CD4-positive, alpha-beta memory T cell (primary cell): ENCODE measurements at regions of chr17 and their contacts with region 1.

Region 1: DNA sequence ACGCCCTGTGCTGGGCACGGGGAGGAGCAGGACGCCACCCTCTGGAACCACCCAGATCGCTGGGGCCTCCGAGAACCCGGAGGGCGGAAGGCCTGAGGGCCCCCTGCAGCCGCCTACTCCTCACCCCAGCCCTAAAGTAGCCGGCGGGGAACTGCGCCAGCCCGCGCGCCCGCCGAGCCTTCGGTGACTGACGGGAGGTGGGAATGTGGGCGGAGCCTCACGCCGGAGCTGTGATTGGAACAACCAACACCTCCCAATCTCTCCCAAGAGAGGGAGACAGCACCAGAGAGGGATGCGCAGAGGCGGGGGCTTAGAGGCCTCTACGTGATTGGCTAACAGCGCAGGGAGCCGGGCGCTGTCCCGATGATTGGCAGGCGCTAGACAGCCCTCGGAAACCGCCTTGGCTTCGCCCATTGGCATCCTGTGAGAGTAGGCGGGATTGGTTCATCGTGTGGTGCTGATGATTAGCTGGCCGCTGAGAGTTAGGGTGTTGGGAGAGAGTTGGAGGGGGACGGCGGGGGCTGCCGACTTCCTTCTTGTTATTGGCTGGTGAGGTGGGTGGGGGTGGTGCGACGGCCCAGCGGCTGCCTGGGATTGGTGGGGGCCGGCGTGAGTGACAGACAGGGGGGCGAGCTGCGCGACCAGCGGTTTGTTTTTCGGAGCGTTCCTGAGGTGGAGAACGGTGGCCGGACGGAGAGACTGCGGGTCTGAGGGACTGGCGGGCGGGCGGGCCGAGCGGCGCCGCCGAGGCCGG is at the start of gene MAP3K3:
- DNase-seq: peak; percentile 97 to 100 (median 98)
- H3K4me3 ChIP-seq: peak within 1 kb of the TSS; percentile 61 to 77
- H3K4me3 Mint-ChIP-seq: peak within 1 kb of the TSS; percentile 95 to 99 (median 98)
- H3K27ac ChIP-seq: peak within 1 kb of the TSS; percentile 79
- H3K27ac Mint-ChIP-seq: peak within 1 kb of the TSS; percentile 90 to 96 (median 94)
- H3K4me1 ChIP-seq: peaks cover 44% of the 10 kb centered on the region
- H3K4me1 Mint-ChIP-seq: peaks cover 29 to 50% (median 40%) of the 10 kb centered on the region in 4 donors
- H3K27me3 ChIP-seq: no peaks in the 10 kb centered on the region
- H3K27me3 Mint-ChIP-seq: no peaks in the 10 kb centered on the region
- total RNA-seq, gene MAP3K3: 98.5 to 98.8 TPM

Region 2: GRCh38 chr17:63434876-63435684 is 186.9 kb before region 1 on chr17:
- CTCF ChIA-PET with region 1: no interaction called
- POLR2A ChIA-PET with region 1: interaction called, 29 read pairs
- intact Hi-C with region 1: no loop called
- DNase-seq: peak; percentile 70 to 82 (median 76)
- H3K4me3 ChIP-seq: no peak overlapping the region
- H3K4me3 Mint-ChIP-seq: peak overlapping the region in 7 of 8 donors; percentile 48 to 79 (median 65)
- H3K27ac ChIP-seq: no peak overlapping the region
- H3K27ac Mint-ChIP-seq: peak overlapping the region; percentile 86 to 97 (median 92)
- H3K4me1 ChIP-seq: peaks cover 56% of the 10 kb centered on the region
- H3K4me1 Mint-ChIP-seq: peaks cover 15 to 70% (median 41%) of the 10 kb centered on the region in 4 donors
- H3K27me3 ChIP-seq: no peaks in the 10 kb centered on the region
- H3K27me3 Mint-ChIP-seq: no peaks in the 10 kb centered on the region

Region 3: GRCh38 chr17:63549946-63550807 is 71.8 kb before region 1 on chr17 and contains the start of gene DCAF7:
- CTCF ChIA-PET with region 1: interaction called, 3 read pairs
- POLR2A ChIA-PET with region 1: interaction called, 13 read pairs
- intact Hi-C with region 1: loop called (anchors 1 kb)
- DNase-seq: peak; percentile 99 to 100 (median 99)
- H3K4me3 ChIP-seq: peak within 1 kb of the TSS; percentile 90 to 91
- H3K4me3 Mint-ChIP-seq: peak within 1 kb of the TSS; percentile 92 to 99 (median 97)
- H3K27ac ChIP-seq: peak within 1 kb of the TSS; percentile 91
- H3K27ac Mint-ChIP-seq: peak within 1 kb of the TSS; percentile 90 to 98 (median 97)
- H3K4me1 ChIP-seq: peaks cover 41% of the 10 kb centered on the region
- H3K4me1 Mint-ChIP-seq: peaks cover 26 to 51% (median 36%) of the 10 kb centered on the region in 4 donors
- H3K27me3 ChIP-seq: no peaks in the 10 kb centered on the region
- H3K27me3 Mint-ChIP-seq: no peaks in the 10 kb centered on the region
- total RNA-seq, gene DCAF7: 88.1 to 93.0 TPM

Region 4: GRCh38 chr17:63635787-63636186 is 13.8 kb after region 1 on chr17:
- CTCF ChIA-PET with region 1: interaction called, 6 read pairs
- POLR2A ChIA-PET with region 1: interaction called, 12 read pairs
- intact Hi-C with region 1: no loop called
- DNase-seq: no peak
- H3K4me3 ChIP-seq: no peak overlapping the region
- H3K4me3 Mint-ChIP-seq: no peak overlapping the region
- H3K27ac ChIP-seq: no peak overlapping the region
- H3K27ac Mint-ChIP-seq: peak overlapping the region in 1 of 7 donors; percentile 69
- H3K4me1 ChIP-seq: peaks cover 22% of the 10 kb centered on the region
- H3K4me1 Mint-ChIP-seq: peaks cover 31 to 53% (median 44%) of the 10 kb centered on the region in 4 donors
- H3K27me3 ChIP-seq: no peaks in the 10 kb centered on the region
- H3K27me3 Mint-ChIP-seq: no peaks in the 10 kb centered on the region

Region 5: DNA sequence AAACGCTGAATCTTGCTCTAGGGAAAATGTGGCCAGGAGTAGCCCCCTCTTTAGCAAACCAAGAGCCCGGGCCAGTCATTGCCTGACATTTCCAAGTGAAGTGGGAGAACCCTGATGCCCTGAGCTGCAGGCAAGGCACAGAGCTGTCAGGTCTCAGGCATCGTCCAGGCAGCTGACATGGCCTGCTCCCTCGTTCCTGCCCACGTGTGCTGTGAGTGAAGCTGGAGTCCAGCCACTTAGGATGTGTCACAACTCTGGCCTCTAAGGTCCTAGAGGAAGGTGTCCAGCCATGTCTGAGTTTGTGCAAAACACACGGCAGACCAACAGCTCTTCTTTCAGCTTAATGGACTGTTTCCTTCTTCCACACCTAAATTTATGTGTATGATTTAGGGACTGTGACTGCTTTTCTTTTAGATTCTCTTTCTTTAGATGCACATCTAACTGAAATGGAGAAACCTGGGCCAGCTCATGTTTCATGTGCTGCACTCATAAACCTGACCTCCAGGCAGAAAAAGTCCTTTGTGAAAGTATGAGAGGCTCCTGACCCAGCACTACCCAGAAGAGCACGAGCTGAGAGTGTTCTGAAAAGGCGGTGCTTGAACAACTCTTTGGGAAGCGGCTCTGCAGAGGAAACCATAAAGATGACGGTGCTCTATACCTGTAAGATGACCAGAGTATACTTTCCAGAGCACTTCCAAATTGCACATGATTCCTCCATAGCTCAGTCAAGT is 92.8 kb after region 1 on chr17:
- CTCF ChIA-PET with region 1: interaction called, 13 read pairs
- POLR2A ChIA-PET with region 1: interaction called, 17 read pairs
- intact Hi-C with region 1: loop called (anchors 1 kb)
- DNase-seq: no peak
- H3K4me3 ChIP-seq: no peak overlapping the region
- H3K4me3 Mint-ChIP-seq: no peak overlapping the region
- H3K27ac ChIP-seq: no peak overlapping the region
- H3K27ac Mint-ChIP-seq: peak overlapping the region in 3 of 7 donors; percentile 6 to 42 (median 7)
- H3K4me1 ChIP-seq: peaks cover 12% of the 10 kb centered on the region
- H3K4me1 Mint-ChIP-seq: peaks cover 10 to 20% (median 13%) of the 10 kb centered on the region in 4 donors
- H3K27me3 ChIP-seq: no peaks in the 10 kb centered on the region
- H3K27me3 Mint-ChIP-seq: no peaks in the 10 kb centered on the region

Region 6: GRCh38 chr17:63751806-63752205 is 129.9 kb after region 1 on chr17:
- CTCF ChIA-PET with region 1: no interaction called
- POLR2A ChIA-PET with region 1: no interaction called
- intact Hi-C with region 1: no loop called
- DNase-seq: peak in 4 of 5 donors; percentile 10 to 25 (median 18)
- H3K4me3 ChIP-seq: no peak overlapping the region
- H3K4me3 Mint-ChIP-seq: peak overlapping the region; percentile 25 to 78 (median 61)
- H3K27ac ChIP-seq: peak overlapping the region; percentile 33
- H3K27ac Mint-ChIP-seq: peak overlapping the region; percentile 69 to 93 (median 73)
- H3K4me1 ChIP-seq: peaks cover 10% of the 10 kb centered on the region
- H3K4me1 Mint-ChIP-seq: peaks cover 7 to 16% (median 8%) of the 10 kb centered on the region in 4 donors
- H3K27me3 ChIP-seq: no peaks in the 10 kb centered on the region
- H3K27me3 Mint-ChIP-seq: no peaks in the 10 kb centered on the region

Region 7: DNA sequence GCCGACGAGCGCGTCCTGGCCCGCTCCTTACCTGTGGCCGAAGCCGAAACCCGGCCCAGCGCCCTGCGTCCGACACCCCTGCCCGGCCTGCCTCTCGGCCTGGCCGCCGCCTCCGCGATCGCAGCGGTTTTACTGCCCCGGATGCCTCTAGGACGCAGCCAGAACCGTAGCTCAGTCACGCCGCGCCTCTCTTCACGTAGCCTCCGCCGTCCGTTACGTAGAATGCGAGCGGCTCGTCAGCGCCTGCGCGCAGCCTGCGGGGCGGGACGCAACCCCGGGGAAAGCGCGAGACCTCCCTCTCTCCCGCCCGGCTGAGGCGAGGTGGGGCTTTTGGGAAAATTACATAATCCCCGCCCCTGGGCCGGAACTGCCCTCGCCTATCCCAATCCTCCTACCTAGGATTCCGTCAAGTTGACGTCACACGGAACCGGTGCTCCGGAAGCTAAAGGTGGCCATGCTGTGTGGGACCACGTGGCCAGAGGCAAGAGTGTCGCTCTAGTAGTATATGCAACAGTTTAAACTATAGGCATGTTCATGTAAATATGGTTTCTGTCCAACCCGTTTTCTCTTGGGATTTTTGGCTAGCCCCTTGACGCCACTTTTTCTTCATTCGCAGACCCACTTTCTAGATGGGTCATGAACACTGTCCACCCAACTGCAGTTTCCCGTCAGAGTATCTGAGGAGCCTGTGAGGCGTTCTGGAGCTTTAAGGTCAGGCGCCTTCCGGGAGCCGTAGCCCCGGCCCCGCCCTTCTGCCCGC is 151.6 kb after region 1 on chr17 and contains the start of gene CCDC47:
- CTCF ChIA-PET with region 1: no interaction called
- POLR2A ChIA-PET with region 1: interaction called, 21 read pairs
- intact Hi-C with region 1: loop called (anchors 1 kb)
- DNase-seq: peak; percentile 99
- H3K4me3 ChIP-seq: peak within 1 kb of the TSS; percentile 87 to 97
- H3K4me3 Mint-ChIP-seq: peak within 1 kb of the TSS; percentile 91 to 100 (median 99)
- H3K27ac ChIP-seq: peak within 1 kb of the TSS; percentile 99
- H3K27ac Mint-ChIP-seq: peak within 1 kb of the TSS; percentile 99 to 100 (median 100)
- H3K4me1 ChIP-seq: peaks cover 66% of the 10 kb centered on the region
- H3K4me1 Mint-ChIP-seq: peaks cover 33 to 81% (median 52%) of the 10 kb centered on the region in 4 donors
- H3K27me3 ChIP-seq: no peaks in the 10 kb centered on the region
- H3K27me3 Mint-ChIP-seq: no peaks in the 10 kb centered on the region
- total RNA-seq, gene CCDC47: 36.7 to 39.0 TPM

Region 8: GRCh38 chr17:63842540-63843386 is 220.8 kb after region 1 on chr17 and contains the start of gene SMARCD2:
- CTCF ChIA-PET with region 1: no interaction called
- POLR2A ChIA-PET with region 1: interaction called, 4 read pairs
- intact Hi-C with region 1: loop called (anchors 2 kb)
- DNase-seq: peak; percentile 97 to 98 (median 98)
- H3K4me3 ChIP-seq: peak within 1 kb of the TSS; percentile 58 to 72
- H3K4me3 Mint-ChIP-seq: peak within 1 kb of the TSS; percentile 86 to 97 (median 94)
- H3K27ac ChIP-seq: peak within 1 kb of the TSS; percentile 84
- H3K27ac Mint-ChIP-seq: peak within 1 kb of the TSS; percentile 87 to 96 (median 95)
- H3K4me1 ChIP-seq: peaks cover 48% of the 10 kb centered on the region
- H3K4me1 Mint-ChIP-seq: peaks cover 17 to 57% (median 35%) of the 10 kb centered on the region in 4 donors
- H3K27me3 ChIP-seq: no peaks in the 10 kb centered on the region
- H3K27me3 Mint-ChIP-seq: no peaks in the 10 kb centered on the region
- total RNA-seq, gene SMARCD2: 113 to 114 TPM